Thyroid gland (tissue), 4 donors: ENCODE measurements at regions of chr5 and their contacts with region 1.

Region 1: GRCh38 chr5:179795863-179796833 is 2.4 kb downstream of the LTC4S start:
- DNase-seq: peak; percentile 86 to 87
- H3K4me3 ChIP-seq: peak overlapping the region; percentile 56 to 89 (median 58)
- H3K27ac ChIP-seq: peak overlapping the region; percentile 73 to 90 (median 87)
- H3K4me1 ChIP-seq: peaks cover 27 to 49% of the 10 kb centered on the region in 2 donors
- H3K27me3 ChIP-seq: no peaks in the 10 kb centered on the region
- CTCF ChIP-seq: peak; percentile 20 to 94 (median 86)
- POLR2A ChIP-seq: peak in 1 of 2 donors; percentile 55

Region 2: DNA sequence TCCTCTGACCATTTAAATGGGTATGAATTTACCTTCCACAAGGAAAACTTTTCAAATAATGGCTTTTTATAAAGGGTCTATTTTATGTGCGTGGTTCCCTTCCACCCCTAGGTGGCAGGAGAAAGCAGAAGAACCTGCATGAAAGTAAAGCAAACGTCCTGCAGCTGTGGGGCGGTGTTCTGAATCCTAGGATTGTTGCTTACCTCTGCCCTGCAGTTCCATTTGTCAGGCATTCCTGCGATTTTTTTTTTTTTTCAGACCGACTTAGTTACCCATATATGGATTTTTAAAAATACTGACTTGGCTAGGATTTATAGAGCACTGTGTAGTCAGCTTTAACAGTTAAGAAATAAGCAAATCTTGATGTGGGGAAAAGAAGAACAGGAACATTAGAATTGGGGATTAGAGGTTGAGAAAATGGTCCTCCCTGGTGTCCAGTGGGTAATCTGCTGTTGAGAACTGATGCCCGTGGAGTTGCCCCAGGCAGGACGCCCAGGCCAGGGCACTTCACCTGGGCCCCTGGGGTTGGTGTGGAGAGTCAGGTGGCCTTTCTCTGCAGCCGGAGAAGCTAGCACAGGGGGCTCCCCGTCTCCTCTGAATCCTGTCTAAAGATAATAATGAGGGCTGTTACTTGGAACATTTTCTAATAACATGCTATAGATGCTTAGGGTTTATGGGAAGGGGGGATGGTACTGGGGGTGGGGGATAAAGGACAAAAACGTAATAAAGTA is 32.8 kb before region 1 on chr5:
- intact Hi-C with region 1: loop called (anchors 5 kb)
- DNase-seq: peak; percentile 73 to 79
- H3K4me3 ChIP-seq: no peak overlapping the region
- H3K27ac ChIP-seq: peak overlapping the region in 2 of 3 donors; percentile 21 to 45
- H3K4me1 ChIP-seq: peaks cover 26 to 44% of the 10 kb centered on the region in 2 donors
- H3K27me3 ChIP-seq: no peaks in the 10 kb centered on the region
- CTCF ChIP-seq: peak; percentile 62 to 93 (median 86)
- POLR2A ChIP-seq: no peak

Region 3: DNA sequence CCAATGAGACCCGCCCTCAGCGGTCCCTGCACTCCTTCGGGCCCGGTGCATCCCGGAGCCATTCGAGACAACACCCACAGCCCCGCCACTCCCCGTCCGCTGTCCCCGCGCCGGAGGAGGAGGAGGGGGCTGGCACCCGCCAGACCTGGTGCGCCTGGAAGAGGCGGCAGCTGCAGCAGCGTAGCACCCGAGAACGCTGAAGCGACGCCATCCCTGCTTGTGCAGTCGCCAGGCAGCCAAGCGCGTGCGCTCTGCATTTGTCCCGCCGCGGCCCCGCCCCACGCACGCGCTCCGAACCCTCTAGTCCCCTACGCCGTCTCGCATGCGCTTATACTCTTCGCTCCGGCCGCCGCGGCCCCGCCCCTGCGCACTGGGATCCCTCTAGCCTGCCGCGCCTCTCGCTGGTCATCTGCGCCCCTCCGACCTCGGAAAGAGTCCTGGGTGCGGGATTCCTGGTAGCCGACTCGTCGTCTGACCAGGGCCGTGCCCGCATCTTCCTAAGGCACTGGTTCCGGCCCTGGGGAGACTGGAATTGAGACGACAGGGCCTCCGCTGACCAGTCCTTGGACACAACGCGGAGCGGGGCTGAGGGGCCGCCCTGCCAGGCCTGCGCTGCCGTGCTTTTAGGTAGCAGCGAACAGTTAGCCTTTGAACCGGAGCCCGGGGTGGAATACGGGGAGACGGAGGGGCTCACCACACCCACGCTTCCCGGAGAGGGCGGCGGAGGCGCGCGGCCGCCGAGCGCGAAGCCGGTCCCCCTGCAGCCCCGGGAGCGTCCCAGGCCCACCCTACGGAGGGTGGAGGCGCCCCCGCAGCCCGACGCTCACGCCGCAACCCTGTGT is 62.7 kb after region 1 on chr5 and contains the start of gene MRNIP:
- intact Hi-C with region 1: loop called (anchors 5 kb)
- DNase-seq: peak; percentile 98
- H3K4me3 ChIP-seq: peak within 1 kb of the TSS; percentile 65 to 92 (median 82)
- H3K27ac ChIP-seq: peak within 1 kb of the TSS; percentile 75 to 84 (median 77)
- H3K4me1 ChIP-seq: peaks cover 5 to 7% of the 10 kb centered on the region in 2 donors
- H3K27me3 ChIP-seq: no peaks in the 10 kb centered on the region
- CTCF ChIP-seq: peak in 3 of 6 experiments; percentile 5 to 61 (median 12)
- POLR2A ChIP-seq: peak; percentile 8 to 95
- total RNA-seq, gene MRNIP: 37.1 to 68.2 (median 52.1) TPM

Region 4: GRCh38 chr5:180161420-180162303 is 365.5 kb after region 1 on chr5:
- intact Hi-C with region 1: no loop called
- DNase-seq: peak in 1 of 2 donors; percentile 40
- H3K4me3 ChIP-seq: no peak overlapping the region
- H3K27ac ChIP-seq: no peak overlapping the region
- H3K4me1 ChIP-seq: no peaks in the 10 kb centered on the region
- H3K27me3 ChIP-seq: no peaks in the 10 kb centered on the region
- CTCF ChIP-seq: no peak
- POLR2A ChIP-seq: no peak

Region 5: DNA sequence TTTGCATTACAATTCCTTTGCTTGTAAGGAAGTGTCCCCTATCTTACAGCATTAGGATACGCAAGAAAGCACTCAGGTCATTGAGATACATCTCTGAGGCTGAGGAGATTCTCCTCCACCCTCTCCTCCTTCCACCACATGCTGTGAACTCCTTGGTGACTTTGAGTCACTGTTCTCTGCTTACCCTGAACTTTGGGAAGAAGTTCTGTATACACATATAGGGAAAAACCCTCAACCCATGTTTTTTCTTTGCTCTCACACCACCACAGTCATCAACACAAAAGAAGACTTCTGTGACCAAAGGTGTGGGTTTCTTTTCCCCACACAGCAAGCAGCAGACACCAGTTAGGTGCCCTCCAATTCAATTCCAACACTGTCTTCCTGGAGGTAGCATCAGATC is 736.1 kb after region 1 on chr5:
- intact Hi-C with region 1: no loop called
- DNase-seq: no peak
- H3K4me3 ChIP-seq: no peak overlapping the region
- H3K27ac ChIP-seq: no peak overlapping the region
- H3K4me1 ChIP-seq: no peaks in the 10 kb centered on the region
- H3K27me3 ChIP-seq: no peaks in the 10 kb centered on the region
- CTCF ChIP-seq: no peak
- POLR2A ChIP-seq: no peak

Region 6: DNA sequence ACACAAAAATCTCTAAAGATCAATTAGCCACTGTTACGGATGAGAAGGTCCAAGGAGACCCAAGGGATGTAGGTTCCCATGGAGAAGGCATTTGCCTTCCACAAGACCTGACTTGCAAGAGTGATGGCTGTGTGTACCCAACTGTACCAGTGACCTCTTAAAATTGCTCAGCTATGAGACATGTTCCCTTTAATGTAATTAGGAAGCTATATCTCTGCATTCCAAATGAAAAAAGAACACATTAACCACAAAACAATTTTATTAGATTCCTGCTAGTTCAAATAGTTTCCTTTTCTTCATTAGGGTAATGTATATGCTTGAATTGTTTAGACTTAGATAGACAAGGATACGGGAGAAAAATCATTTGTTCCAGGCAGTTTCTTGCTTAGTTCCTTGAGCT is 940.4 kb after region 1 on chr5:
- intact Hi-C with region 1: no loop called
- DNase-seq: no peak
- H3K4me3 ChIP-seq: no peak overlapping the region
- H3K27ac ChIP-seq: no peak overlapping the region
- H3K4me1 ChIP-seq: no peaks in the 10 kb centered on the region
- H3K27me3 ChIP-seq: no peaks in the 10 kb centered on the region
- CTCF ChIP-seq: no peak
- POLR2A ChIP-seq: no peak